OCI-LY7 (cell line): ENCODE measurements at regions of chr2 and their contacts with region 1.

Region 1: DNA sequence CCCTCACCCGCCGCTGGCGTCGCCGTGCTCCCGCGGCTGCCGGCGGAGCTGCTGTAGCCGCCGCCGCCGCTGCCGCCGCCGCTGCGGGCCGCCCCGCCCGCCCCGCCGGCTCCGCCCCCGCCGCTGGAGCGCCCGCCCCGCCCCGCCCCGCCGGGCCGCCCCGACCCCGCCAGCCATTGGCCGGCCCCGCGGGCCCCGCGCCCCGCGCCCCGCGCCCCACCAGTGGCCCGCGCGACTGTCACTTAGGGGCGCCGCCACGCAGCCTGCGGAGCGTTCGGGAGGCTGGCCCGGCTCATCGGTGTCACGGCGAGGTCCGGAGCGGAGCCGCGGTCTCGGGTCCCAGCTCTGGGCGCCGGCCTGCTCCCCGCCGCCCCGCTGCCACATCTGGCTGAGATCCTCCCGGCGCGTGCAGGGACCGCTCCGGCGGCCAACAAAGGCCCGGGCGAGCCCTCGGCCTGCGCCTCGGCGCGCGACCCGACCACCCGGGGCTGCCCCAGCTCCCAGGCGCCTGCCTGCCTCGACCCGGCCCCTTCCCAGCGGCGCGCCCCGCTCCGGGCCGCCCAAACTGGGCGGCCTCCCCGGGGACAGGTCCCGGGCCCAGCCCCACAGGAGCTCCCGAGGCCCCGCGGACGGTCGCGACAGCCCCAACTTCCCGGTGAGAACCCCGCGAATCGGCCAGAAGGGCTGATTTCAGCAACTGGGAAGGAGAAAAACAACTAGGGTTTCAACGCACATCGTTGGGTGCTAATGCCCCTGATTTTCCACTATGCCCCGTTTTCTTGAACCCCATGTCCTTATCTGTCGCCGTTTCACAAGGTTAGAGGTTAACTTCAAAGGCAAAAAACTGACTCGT is at the start of gene MGAT4A:
- DNase-seq: peak; percentile 68
- H3K4me3 ChIP-seq: peak within 1 kb of the TSS; percentile 80
- H3K27ac ChIP-seq: no peak within 1 kb of the TSS
- H3K4me1 ChIP-seq: peaks cover 50% of the 10 kb centered on the region
- CTCF ChIP-seq: no peak
- total RNA-seq, gene MGAT4A: 7.7 and 10.1 TPM in 2 replicates

Region 2: DNA sequence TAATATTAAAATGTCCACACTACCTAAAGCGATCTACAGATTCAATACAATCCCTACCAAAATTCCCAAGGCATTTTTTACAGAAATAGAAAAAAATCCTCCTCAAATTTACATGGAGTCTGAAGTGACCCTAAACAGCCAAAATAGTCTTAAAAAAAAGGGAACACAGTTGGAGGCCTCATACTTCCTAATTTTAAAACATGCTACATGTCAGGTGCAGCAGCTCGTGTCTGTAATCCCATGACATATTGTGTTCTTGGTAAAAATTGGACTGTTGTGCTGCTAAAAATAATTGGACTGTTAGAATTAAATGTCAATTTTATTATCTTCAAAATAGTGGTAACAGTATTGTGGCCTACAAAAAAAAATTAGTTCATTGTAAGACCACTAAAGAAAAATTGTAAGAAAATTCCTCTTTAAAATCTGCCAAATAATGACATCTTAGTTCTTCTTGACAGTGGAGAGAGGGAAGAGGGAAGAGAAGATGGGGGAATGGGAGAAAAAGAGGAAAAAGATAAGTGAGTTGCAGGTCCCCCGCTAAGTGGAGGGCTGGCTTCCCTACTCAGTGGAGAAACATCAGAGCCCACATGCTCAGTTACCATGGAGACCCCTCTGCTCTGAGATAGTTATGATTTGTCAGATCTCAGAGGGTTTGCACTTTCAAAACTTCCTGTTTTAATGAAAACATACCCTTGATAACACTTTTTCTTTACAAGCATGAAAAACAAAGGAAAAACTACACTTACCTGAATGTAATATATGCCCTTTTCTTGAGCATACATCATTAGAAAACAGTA is 76.4 kb before region 1 on chr2:
- CTCF ChIA-PET with region 1: no interaction called
- POLR2A ChIA-PET with region 1: no interaction called
- intact Hi-C with region 1: loop called (anchors 10 kb)
- DNase-seq: no peak
- H3K4me3 ChIP-seq: no peak overlapping the region
- H3K27ac ChIP-seq: no peak overlapping the region
- H3K4me1 ChIP-seq: peaks cover 9% of the 10 kb centered on the region
- CTCF ChIP-seq: no peak

Region 3: DNA sequence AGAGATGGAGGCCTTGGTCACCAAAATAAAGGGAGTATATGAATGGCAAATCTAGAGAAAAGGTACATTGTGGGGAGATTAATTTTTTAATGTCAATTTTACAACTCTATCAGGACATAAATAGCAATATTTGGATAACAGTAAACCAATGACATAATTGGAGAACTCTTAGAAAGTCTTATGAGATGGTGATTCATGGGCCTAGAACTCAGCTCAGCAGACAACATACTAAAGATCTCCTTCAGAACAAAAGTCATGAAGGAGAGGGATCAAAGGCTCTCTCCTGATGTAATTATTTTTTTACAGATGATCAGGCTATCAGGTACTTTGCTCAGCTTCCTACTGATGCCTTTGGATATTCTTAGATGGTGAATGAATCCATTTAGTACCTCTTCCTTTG is 114.8 kb after region 1 on chr2:
- CTCF ChIA-PET with region 1: no interaction called
- POLR2A ChIA-PET with region 1: no interaction called
- intact Hi-C with region 1: no loop called
- DNase-seq: no peak
- H3K4me3 ChIP-seq: no peak overlapping the region
- H3K27ac ChIP-seq: no peak overlapping the region
- H3K4me1 ChIP-seq: no peaks in the 10 kb centered on the region
- CTCF ChIP-seq: no peak